MCF 10A (cell line): ENCODE measurements at regions of chr1 and their contacts with region 1.

Region 1: DNA sequence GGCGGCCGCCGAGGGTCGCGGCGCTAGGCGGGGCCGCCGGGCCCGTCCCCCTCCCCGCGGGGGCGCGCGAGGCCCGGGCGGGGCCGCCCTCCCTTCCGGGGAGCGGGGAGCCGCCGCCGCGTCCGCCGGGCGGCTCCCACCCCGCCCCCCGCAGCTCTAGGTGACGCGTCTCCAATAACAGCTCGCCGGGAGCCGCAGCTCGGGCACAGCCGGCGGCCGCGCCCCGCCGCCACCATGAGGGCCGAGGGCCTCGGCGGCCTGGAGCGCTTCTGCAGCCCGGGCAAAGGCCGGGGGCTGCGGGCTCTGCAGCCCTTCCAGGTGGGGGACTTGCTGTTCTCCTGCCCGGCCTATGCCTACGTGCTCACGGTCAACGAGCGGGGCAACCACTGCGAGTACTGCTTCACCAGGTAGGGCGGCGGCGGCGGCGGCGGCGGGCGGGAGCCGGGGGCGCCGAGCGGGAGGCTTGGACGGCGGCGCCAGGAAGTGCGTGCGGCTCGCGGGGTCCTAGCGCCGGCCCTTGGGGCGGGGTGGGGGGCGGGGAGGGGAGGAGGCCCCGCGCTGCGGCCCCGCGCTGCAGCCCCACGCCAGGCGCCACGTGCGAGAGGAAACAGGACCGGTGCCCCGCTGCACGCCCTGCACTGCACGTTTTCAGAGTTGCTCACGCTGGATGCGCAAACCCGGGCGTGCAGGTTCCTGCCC is at the start of gene SMYD2:
- DNase-seq: peak; percentile 84
- H3K4me3 Mint-ChIP-seq: peak within 1 kb of the TSS; percentile 89
- H3K27ac Mint-ChIP-seq: peak within 1 kb of the TSS; percentile 84
- H3K4me1 Mint-ChIP-seq: peaks cover 37% of the 10 kb centered on the region
- H3K27me3 Mint-ChIP-seq: no peaks in the 10 kb centered on the region
- CTCF ChIP-seq: no peak
- total RNA-seq, gene SMYD2: 54.5 and 75.1 TPM in 2 replicates

Region 2: DNA sequence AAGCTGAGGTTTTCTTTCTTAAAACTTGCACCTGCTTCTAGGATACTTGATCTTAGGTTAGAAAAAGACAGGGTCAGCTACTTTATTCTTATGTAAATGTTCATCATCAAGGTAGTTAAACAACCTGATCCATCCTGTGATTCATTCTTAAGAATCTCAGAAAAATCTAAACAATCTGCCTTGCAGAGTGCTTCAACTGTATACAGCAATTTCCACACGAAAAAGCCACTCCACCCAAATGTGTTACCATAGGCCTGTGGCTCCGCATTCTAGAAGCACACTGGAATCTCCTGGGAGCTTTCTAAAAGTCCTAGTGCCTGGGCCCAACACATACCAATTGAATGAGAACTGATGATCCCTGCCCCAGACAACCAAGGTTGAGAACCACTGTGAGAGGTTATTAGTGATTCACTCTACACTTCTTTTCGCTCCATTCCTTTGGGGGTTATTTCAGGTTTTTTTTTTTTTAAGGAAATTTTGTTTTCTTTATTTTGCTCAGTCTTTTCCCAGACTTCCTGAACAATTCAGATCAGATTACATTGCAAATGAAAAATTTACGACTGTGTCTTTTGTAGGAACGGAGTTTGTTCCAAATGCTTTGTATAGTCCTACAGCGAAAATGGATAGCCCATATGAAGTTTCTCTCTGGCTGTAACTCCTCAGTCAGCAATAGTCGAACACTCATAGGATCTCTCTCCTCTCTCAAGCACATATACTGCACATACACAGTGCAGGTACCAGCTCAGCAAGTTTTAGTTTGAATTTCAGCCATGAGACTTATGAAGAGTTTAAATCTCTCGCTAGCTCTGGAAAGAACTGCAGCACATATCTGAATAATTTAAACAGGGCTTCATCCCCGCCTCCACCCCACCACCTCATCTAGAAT is 15.9 kb after region 1 on chr1:
- CTCF ChIA-PET with region 1: interaction called, 7 read pairs
- POLR2A ChIA-PET with region 1: interaction called, 10 read pairs
- intact Hi-C with region 1: no loop called
- DNase-seq: peak; percentile 24
- H3K4me3 Mint-ChIP-seq: no peak overlapping the region
- H3K27ac Mint-ChIP-seq: peak overlapping the region; percentile 10
- H3K4me1 Mint-ChIP-seq: peaks cover 23% of the 10 kb centered on the region
- H3K27me3 Mint-ChIP-seq: no peaks in the 10 kb centered on the region
- CTCF ChIP-seq: no peak

Region 3: DNA sequence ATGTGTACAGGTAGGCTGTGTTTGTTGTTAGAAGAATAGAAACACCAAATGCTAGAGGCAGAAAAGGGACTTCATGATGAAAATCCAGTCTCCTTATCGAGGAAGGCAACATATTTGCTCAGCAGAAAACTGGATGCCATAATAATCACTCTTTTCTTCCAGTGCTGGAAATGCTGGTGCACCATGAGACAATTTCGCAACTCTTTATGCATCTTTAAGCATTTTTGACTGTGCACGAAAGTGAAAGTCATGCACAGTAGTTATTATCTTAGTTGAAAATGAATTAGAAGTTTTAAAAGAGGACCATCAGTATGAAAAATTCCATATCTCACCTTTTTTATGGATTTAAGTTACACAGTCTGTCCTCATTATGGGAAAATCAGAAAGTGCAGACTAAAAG is 28.8 kb after region 1 on chr1:
- CTCF ChIA-PET with region 1: interaction called, 21 read pairs
- POLR2A ChIA-PET with region 1: interaction called, 4 read pairs
- intact Hi-C with region 1: loop called (anchors 2 kb)
- DNase-seq: peak; percentile 34
- H3K4me3 Mint-ChIP-seq: no peak overlapping the region
- H3K27ac Mint-ChIP-seq: no peak overlapping the region
- H3K4me1 Mint-ChIP-seq: no peaks in the 10 kb centered on the region
- H3K27me3 Mint-ChIP-seq: no peaks in the 10 kb centered on the region
- CTCF ChIP-seq: no peak

Region 4: DNA sequence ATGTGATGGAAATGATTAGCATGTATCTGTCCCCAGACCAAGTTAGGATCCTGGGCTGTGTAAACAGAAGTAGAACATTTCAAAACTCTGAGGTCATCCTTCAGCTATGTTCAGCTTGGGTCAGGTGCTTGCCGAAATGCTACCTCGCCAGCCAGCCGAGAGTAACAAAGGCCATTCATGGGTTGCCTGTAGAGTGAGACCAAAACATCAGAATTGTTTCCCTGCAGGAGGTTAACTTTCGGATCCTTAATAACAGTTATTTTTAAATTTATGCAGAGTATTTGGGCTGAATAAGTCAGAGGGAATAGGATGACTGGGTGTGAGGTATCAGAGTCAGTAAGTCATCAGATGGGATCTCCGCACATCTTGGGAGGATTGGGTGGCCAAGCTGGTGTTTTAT is 35.4 kb after region 1 on chr1:
- CTCF ChIA-PET with region 1: interaction called, 21 read pairs
- POLR2A ChIA-PET with region 1: interaction called, 4 read pairs
- intact Hi-C with region 1: no loop called
- DNase-seq: peak; percentile 38
- H3K4me3 Mint-ChIP-seq: no peak overlapping the region
- H3K27ac Mint-ChIP-seq: no peak overlapping the region
- H3K4me1 Mint-ChIP-seq: no peaks in the 10 kb centered on the region
- H3K27me3 Mint-ChIP-seq: no peaks in the 10 kb centered on the region
- CTCF ChIP-seq: no peak